Left cardiac atrium (tissue), 4 donors: ENCODE measurements at regions of chrX and their contacts with region 1.

Region 1: DNA sequence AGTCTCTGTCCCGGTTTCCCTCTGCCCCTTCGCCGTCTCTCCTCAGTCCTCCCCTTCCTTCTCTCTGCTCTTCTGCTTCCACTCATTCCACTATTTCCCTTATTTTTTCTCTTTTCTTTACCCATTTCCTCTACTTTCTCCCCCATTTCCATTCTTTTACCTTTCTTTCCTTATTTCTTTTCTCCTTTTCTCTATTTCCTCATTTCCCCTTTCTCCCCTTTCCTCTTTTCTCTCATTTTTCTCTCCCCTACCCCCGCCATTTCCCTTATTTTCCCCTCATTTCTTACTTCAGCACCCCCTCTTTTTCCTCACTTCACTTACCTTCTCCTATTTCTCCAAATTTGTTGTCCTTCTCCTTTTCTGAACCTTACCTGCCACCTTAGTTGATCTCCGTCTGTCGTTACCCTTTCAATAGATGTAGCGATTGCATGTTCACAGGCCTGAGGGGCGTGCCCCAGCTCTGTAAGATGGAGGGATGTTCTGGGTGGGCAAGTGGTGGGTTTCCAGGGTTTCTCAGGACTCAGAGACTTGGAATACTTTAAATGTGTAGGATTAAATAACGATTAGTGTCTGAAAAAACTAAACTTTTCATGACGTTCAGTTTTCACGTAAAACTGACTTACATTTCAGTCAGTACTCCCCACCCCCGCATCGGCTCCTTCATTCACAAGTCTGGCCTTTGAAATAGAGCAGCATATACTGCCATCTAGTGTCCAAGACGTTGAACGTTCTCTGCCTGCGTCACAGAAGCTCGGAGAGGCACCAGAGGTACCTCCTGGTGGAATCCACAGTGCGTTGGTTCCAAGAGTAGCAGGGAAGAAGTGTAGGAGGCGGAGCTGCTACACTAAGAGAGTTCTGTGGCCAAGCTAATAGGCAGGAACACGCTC is 641 bp upstream of the NCBP2L start:
- DNase-seq: peak; percentile 85
- ATAC-seq: peak; percentile 77 to 81

Region 2: DNA sequence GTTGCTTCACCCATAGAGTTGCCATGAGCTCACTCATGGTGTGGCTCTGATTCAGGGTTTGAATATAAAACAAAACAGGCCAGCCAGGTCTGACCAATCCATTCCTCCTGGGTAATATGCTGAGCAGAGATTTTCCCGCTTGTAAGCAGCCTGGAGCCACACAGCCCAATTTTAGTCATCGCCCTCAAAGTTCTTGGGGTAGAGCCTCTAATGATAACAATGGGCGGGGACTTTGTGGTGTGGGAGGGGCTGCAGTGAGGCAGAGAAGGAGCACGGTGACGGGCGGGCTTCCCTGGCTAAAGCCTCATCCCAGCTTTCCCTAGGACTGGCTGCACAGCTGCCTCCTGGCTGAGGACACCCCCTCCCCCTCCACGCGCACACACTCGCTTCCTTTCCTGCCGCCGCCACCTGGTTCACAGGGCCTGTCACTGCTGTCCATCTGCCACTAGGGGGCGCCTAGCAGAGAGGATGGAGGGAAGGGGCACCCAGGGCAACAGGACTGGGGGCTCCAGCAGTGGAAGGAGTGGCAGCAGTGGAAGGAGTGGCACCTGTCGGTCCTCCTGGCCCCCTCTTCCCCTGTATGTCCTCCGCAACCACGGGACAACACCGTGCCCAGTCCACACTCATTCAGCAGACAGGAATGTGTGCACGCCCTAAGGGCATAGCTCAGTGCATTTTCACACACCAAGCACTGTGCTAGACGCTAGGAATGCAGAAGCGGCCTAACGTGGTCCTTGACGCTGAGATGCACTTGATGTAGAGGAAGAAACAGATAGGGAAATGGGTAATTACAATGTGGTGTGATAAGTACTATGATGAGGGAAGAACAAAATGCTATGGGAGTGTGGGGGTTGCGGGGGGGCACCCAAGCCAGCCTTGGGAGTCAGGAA is 121.8 kb before region 1 on chrX:
- intact Hi-C with region 1: loop called in 1 of 2 experiments (anchors 2 kb)
- DNase-seq: peak; percentile 63
- ATAC-seq: peak; percentile 69 to 86

Region 3: DNA sequence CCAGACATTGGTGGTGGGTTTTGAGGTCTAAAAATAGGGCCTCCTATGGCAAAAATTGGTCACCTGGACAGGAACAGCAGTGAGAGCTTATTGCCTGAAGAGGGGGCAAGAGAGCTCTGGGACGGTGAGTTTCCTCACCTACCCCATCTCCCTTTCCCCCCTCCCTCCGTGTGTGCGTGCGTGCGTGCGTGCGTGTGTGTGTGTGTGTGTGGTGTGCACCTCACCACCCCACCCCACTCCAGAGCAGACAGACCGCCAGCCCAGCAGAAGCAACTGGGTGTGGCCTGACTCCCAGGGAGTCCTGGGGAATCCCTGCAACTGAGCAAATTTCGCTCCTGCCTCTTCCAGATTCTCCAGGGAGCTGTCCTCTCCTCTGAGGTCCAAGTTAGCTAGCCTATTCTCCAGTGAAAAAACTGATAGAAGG is 103.9 kb before region 1 on chrX:
- intact Hi-C with region 1: loop called (anchors 5 kb)
- DNase-seq: peak; percentile 75
- ATAC-seq: peak; percentile 34 to 64

Region 4: DNA sequence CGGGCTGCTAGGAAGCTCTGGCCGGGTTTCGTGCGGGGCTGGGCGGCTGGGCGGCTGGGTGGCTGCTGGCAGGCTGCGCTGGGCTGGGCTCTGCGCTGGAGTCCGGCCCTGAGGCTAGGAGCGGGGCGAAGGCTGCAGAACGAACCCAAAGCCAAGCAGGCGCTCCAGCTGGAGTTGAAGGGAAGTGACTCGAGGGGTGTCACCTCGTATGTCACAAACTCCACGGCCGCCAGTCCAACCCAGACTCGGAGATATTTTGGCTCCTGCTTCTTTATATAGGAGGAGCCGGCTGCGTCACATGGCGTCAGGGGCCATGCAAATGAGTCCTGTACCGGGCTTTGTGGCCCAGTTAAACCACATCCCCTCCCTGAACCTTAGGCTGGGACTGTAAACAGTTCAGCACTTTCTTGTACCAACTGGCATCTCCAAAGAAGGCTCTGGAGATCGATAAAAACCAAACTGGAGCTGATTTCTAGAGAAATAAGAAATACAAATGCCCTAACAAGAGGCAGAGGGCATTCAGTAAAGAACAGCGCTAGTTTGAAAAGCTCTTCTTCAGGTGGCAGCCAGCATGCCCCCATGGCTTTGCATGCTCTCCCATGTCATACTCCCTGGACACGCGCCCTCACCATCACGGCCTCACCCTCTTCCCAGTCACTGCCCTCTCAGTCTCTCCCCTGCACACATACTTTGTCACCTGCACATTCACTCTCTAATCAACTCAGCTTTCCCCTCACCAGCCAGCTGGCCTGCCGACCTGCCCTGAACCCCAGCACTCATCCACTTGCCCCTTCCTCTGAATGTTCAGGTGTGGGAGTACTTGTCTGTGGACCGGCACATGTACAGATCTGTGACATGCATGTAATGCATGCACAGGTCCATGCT is 59.8 kb before region 1 on chrX:
- intact Hi-C with region 1: loop called (anchors 5 kb)
- DNase-seq: peak; percentile 88
- ATAC-seq: peak; percentile 74 to 79

Region 5: DNA sequence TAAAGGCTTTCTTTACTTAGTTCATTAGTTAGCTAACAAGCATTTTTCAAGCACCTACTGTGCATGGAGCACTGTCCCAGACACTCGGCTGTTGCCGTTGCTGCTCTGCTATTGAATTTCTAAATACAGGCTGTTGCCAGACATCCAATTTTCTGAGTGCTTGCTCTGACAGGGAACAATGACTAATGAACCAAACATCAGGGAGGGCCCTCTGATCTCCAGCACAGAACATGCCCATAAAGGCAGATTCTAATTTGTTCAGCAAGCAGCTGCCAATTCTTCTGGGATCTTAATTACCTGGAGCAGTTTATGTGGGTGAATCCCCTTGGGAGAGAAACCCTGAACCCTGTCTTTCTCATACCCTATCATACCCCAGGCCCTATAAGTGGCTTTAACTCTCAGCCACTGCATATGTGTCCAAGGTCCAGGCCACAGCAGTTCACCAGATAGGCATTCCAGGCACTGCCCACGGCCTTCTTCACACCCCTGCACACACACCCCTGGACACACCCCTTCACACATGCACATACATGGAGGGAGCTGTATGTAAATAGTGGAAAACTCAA is 29.2 kb before region 1 on chrX:
- intact Hi-C with region 1: no loop called
- DNase-seq: no peak
- ATAC-seq: peak; percentile 70 to 91

Region 6: DNA sequence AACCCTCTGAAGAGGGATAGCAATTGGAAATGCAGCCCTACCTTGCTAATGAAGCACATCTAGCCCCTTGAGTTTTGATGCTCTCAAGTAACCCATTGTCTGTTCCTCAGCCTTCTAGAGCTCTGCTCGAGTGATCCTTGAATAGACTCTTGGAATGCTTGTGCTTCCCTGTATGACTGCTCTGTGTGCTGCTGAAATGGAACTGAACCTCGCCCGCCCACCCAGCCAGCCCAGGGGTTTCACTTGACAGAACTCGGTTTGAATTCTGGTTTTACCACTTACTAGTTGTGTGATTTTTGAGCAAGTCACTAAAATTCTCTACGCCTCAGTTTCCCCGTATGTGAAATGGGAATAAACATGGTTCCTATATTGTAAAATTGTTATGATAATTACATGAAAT is 125.8 kb after region 1 on chrX:
- intact Hi-C with region 1: no loop called
- DNase-seq: no peak
- ATAC-seq: no peak